ENCODE measurements at regions of chr3 and their contacts with region 1.

Region 1: GRCh38 chr3:182364723-182365650 is 428.3 kb upstream of the ATP11B start:
- DNase-seq: peak; percentile 88
- H3K4me3 Mint-ChIP-seq: peak overlapping the region; percentile 59
- H3K27ac Mint-ChIP-seq: peak overlapping the region; percentile 75
- H3K4me1 Mint-ChIP-seq: peaks cover 19% of the 10 kb centered on the region
- H3K27me3 Mint-ChIP-seq: no peaks in the 10 kb centered on the region
- CTCF ChIP-seq: no peak

Region 2: DNA sequence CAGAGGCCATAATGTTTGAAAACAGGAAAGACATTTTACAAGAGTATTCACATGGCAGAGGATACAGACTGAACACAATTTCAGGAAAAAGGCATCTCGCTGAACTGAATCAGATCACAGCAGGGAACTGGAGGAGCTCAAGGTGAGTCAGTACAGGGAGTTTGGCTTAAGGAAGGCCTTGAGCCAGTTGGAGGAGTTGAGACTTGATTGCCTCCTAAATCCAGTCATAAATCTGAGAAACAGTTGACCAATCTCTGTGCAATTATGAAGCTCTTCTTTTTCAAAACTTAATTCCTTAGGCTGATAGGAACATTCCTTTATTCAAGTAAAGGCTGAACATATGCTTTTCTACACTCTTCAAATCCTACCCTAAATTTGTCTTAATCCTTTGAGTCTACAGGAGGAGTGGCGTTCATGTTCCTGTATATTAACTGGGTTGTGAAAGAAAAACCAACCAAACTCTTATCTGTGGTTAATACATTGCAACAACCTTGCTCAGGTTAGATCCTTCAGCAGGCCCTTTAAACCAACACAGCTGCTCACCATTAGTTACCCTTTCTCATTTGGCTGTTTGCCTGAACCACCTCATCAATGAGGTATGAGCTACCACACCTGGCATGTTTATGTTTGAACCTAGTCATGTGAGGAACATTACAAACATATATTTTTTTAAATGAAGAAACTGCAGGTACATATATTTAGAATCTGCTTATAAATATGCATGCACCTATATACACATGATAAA is 24.3 kb after region 1 on chr3:
- CTCF ChIA-PET with region 1: interaction called, 7 read pairs
- POLR2A ChIA-PET with region 1: interaction called, 16 read pairs
- intact Hi-C with region 1: no loop called
- DNase-seq: peak; percentile 84
- H3K4me3 Mint-ChIP-seq: no peak overlapping the region
- H3K27ac Mint-ChIP-seq: peak overlapping the region; percentile 50
- H3K4me1 Mint-ChIP-seq: peaks cover 15% of the 10 kb centered on the region
- H3K27me3 Mint-ChIP-seq: no peaks in the 10 kb centered on the region
- CTCF ChIP-seq: no peak

Region 3: GRCh38 chr3:182508916-182509711 is 144.1 kb after region 1 on chr3:
- CTCF ChIA-PET with region 1: no interaction called
- POLR2A ChIA-PET with region 1: no interaction called
- intact Hi-C with region 1: no loop called
- DNase-seq: no peak
- H3K4me3 Mint-ChIP-seq: no peak overlapping the region
- H3K27ac Mint-ChIP-seq: no peak overlapping the region
- H3K4me1 Mint-ChIP-seq: no peaks in the 10 kb centered on the region
- H3K27me3 Mint-ChIP-seq: no peaks in the 10 kb centered on the region
- CTCF ChIP-seq: no peak

Region 4: DNA sequence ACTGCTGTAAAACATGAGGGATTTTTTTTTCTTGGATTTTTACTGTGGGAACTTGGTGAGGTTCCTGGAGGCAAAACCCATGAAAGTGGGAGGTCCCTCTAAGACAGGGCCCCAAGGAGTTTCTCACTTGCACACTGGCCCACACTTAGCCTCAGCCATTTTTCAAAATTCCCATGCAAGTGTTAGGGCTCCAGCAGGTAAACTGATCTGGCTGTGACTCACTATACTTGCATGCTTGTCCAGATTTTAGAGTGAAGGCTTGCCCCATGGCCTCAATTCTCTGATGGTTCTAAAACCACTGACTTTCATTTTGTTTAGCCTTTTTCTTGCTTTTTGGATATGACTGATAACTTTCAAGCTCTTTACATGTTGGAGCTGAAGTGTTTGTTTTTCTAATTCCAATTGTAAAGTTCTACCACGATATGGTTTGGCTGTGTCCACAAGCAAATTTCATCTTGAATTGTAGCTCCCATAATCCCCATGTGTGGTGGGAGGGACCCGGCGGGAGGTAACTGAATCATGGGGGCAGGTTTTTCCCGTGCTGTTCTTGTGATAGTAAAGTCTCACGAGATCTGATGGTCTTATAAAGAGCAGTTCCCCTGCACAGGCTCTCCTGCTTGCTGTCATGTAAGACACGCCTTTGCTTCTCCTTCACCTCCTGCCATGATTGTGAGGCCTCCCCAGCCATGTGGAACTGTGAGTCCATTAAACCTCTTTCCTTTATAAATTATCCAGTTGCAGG is 696.6 kb after region 1 on chr3:
- CTCF ChIA-PET with region 1: no interaction called
- POLR2A ChIA-PET with region 1: no interaction called
- intact Hi-C with region 1: no loop called
- DNase-seq: no peak
- H3K4me3 Mint-ChIP-seq: no peak overlapping the region
- H3K27ac Mint-ChIP-seq: no peak overlapping the region
- H3K4me1 Mint-ChIP-seq: peaks cover 4% of the 10 kb centered on the region
- H3K27me3 Mint-ChIP-seq: no peaks in the 10 kb centered on the region
- CTCF ChIP-seq: no peak